ENCODE measurements at regions of chr9 and their contacts with region 1.

Region 1: GRCh38 chr9:76458903-76459690 is at the start of gene GCNT1:
- DNase-seq: peak; percentile 93
- H3K4me3 Mint-ChIP-seq: peak within 1 kb of the TSS; percentile 86
- H3K27ac Mint-ChIP-seq: peak within 1 kb of the TSS; percentile 76
- H3K4me1 Mint-ChIP-seq: peaks cover 39% of the 10 kb centered on the region
- H3K27me3 Mint-ChIP-seq: no peaks in the 10 kb centered on the region
- total RNA-seq, gene GCNT1: 13.3 to 14.4 TPM

Region 2: GRCh38 chr9:76448501-76448900 is 10.6 kb before region 1 on chr9:
- CTCF ChIA-PET with region 1: interaction called, 15 read pairs
- POLR2A ChIA-PET with region 1: no interaction called
- DNase-seq: no peak
- H3K4me3 Mint-ChIP-seq: no peak overlapping the region
- H3K27ac Mint-ChIP-seq: no peak overlapping the region
- H3K4me1 Mint-ChIP-seq: peaks cover 33% of the 10 kb centered on the region
- H3K27me3 Mint-ChIP-seq: no peaks in the 10 kb centered on the region

Region 3: DNA sequence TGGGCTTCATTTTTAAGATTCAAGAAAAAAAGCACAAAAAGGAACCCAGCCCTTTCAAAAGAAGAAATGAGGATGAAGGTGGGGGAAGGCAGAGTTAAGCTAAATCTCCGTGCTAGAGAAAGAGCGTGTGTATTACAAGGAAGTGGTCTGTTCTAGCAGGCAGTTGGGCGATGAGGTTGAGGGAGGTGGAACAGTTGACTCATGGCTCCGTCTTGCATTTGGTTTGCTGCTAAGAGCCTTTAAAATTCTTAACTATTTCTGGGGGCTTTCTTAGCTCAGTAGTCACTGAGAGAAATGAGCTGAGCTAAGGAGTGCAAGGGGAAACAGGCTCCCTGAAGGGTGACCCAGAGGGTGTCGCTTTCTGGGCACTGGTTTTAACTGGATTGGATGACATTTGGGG is 117.2 kb after region 1 on chr9:
- CTCF ChIA-PET with region 1: interaction called, 4 read pairs
- POLR2A ChIA-PET with region 1: interaction called, 16 read pairs
- DNase-seq: peak; percentile 85
- H3K4me3 Mint-ChIP-seq: peak overlapping the region; percentile 11
- H3K27ac Mint-ChIP-seq: peak overlapping the region; percentile 90
- H3K4me1 Mint-ChIP-seq: peaks cover 46% of the 10 kb centered on the region
- H3K27me3 Mint-ChIP-seq: peaks cover 2% of the 10 kb centered on the region

Region 4: DNA sequence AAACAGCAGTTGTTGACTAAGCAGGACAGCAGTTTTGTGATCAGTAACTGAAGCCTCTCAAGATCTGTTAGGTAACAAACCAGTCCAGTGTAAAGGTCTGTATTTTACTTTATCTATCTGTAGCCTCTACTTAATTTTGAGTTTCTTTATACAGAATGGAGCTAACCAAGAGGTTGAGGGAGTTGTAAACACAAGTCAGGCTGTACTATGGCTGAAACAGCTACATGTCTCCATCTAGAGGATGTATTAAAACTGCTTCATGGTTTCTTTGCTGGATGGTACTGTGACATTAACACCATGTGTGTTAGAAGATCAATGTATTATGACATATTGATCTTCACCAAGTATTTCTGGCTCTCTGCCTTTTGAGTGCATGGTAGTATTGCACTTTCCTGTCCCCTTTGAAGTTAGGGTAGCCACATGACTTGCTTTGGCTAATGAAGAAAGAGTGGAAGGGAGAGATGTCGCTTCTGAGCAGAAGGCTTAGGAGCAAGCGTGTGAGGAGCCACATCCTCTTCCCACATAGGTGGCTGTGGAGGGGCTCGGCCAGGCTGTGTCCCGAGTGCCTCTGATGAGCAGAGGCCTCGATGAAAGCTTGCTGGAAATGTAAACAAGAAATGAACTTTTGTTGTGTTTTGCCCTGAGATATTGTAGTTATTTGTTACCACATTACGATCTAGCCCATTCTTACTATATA is 199.6 kb after region 1 on chr9:
- CTCF ChIA-PET with region 1: interaction called, 15 read pairs
- POLR2A ChIA-PET with region 1: interaction called, 4 read pairs
- DNase-seq: no peak
- H3K4me3 Mint-ChIP-seq: no peak overlapping the region
- H3K27ac Mint-ChIP-seq: no peak overlapping the region
- H3K4me1 Mint-ChIP-seq: peaks cover 50% of the 10 kb centered on the region
- H3K27me3 Mint-ChIP-seq: no peaks in the 10 kb centered on the region